B cell (primary cell): ENCODE measurements at regions of chr9 and their contacts with region 1.

Region 1: GRCh38 chr9:79757881-79758669 is 186.3 kb downstream of the TLE4 start:
- DNase-seq: peak; percentile 39
- ATAC-seq: no peak
- H3K4me3 ChIP-seq: no peak overlapping the region
- H3K4me3 Mint-ChIP-seq: no peak overlapping the region
- H3K27ac ChIP-seq: no peak overlapping the region
- H3K27ac Mint-ChIP-seq: no peak overlapping the region
- H3K4me1 ChIP-seq: no peaks in the 10 kb centered on the region
- H3K4me1 Mint-ChIP-seq: no peaks in the 10 kb centered on the region
- H3K27me3 ChIP-seq: no peaks in the 10 kb centered on the region
- H3K27me3 Mint-ChIP-seq: peaks cover 3% of the 10 kb centered on the region
- CTCF ChIP-seq: peak; percentile 65

Region 2: GRCh38 chr9:79673614-79674013 is 84.5 kb before region 1 on chr9:
- CTCF ChIA-PET with region 1: no interaction called
- POLR2A ChIA-PET with region 1: no interaction called
- intact Hi-C with region 1: no loop called
- DNase-seq: no peak
- ATAC-seq: no peak
- H3K4me3 ChIP-seq: no peak overlapping the region
- H3K4me3 Mint-ChIP-seq: peak overlapping the region; percentile 30
- H3K27ac ChIP-seq: no peak overlapping the region
- H3K27ac Mint-ChIP-seq: no peak overlapping the region
- H3K4me1 ChIP-seq: peaks cover 16 to 21% of the 10 kb centered on the region in 2 donors
- H3K4me1 Mint-ChIP-seq: peaks cover 45% of the 10 kb centered on the region
- H3K27me3 ChIP-seq: no peaks in the 10 kb centered on the region
- H3K27me3 Mint-ChIP-seq: no peaks in the 10 kb centered on the region
- CTCF ChIP-seq: no peak

Region 3: GRCh38 chr9:79945016-79945415 is 186.9 kb after region 1 on chr9:
- CTCF ChIA-PET with region 1: interaction called, 5 read pairs
- POLR2A ChIA-PET with region 1: no interaction called
- intact Hi-C with region 1: loop called (anchors 1 kb)
- DNase-seq: peak; percentile 39
- ATAC-seq: peak; percentile 31
- H3K4me3 ChIP-seq: no peak overlapping the region
- H3K4me3 Mint-ChIP-seq: no peak overlapping the region
- H3K27ac ChIP-seq: no peak overlapping the region
- H3K27ac Mint-ChIP-seq: no peak overlapping the region
- H3K4me1 ChIP-seq: no peaks in the 10 kb centered on the region
- H3K4me1 Mint-ChIP-seq: peaks cover 6% of the 10 kb centered on the region
- H3K27me3 ChIP-seq: no peaks in the 10 kb centered on the region
- H3K27me3 Mint-ChIP-seq: no peaks in the 10 kb centered on the region
- CTCF ChIP-seq: peak; percentile 45

Region 4: GRCh38 chr9:80175286-80176150 is 417.4 kb after region 1 on chr9:
- CTCF ChIA-PET with region 1: interaction called, 8 read pairs
- POLR2A ChIA-PET with region 1: no interaction called
- intact Hi-C with region 1: loop called (anchors 2 kb)
- DNase-seq: peak; percentile 62
- ATAC-seq: no peak
- H3K4me3 ChIP-seq: no peak overlapping the region
- H3K4me3 Mint-ChIP-seq: no peak overlapping the region
- H3K27ac ChIP-seq: no peak overlapping the region
- H3K27ac Mint-ChIP-seq: no peak overlapping the region
- H3K4me1 ChIP-seq: no peaks in the 10 kb centered on the region
- H3K4me1 Mint-ChIP-seq: no peaks in the 10 kb centered on the region
- H3K27me3 ChIP-seq: no peaks in the 10 kb centered on the region
- H3K27me3 Mint-ChIP-seq: no peaks in the 10 kb centered on the region
- CTCF ChIP-seq: peak; percentile 90